H1 (cell line): ENCODE measurements at regions of chr9 and their contacts with region 1.

Region 1: GRCh38 chr9:113591001-113591898 is 127.7 kb downstream of the RGS3 start:
- DNase-seq: peak; percentile 60 to 94
- H3K4me3 ChIP-seq: no peak overlapping the region
- H3K27ac ChIP-seq: no peak overlapping the region
- H3K4me1 ChIP-seq: peaks cover 10 to 23% (median 15%) of the 10 kb centered on the region in 4 experiments
- H3K27me3 ChIP-seq: no peaks in the 10 kb centered on the region
- CTCF ChIP-seq: peak in 2 of 3 experiments; percentile 96 to 97; a peak in 3 of 4 replicates
- EP300 ChIP-seq: peak; percentile 12 to 47; a peak in 1 of 3 replicates
- POLR2A ChIP-seq: no peak
- RAD21 ChIP-seq: peak; percentile 99 to 100

Region 2: DNA sequence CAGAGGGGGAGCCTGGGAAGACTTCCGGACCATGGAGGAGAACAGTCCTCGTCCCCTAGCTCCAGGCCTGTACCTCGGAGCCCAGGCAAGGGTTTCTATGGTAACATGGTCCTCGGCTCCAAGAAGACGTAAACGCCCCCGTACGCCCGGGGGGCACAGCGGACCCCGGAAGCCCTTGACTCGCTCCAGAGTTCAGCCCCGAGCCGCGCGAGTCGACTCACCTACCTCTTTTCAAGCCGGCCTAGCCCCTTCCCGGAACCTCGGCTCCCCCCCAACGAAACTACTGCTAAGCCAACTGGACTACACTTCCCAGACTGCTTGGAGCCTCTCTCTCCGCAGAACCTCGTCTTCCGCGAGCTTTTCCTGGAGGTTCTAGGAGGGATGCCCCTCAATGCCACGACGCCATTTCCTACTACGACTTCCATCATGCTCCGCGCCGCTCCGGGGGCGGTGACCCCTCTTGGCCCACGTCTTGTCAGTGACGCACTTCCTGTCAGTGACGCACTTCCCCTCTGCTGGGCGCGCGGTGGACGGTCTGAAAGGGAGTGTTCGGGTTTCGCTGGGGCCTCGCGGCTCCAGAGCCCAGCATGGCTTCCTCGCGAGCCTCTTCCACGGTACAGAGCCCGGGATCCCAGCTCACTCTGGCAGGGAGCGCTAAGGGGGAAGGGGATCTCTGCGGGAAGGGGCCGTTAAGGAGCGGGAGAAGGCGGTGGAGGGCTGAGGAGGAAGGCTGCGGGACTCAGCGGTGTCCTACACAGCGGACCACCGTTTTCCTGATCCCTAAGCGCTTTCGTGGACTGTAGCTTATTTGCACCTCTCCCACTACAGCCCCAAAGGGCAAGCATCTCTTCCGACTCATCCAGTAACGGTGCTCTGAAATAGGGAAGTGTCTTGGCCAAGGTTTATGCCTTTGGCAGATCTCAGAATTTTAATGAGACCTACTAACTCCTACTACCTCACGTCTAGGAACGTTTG is 315.8 kb before region 1 on chr9 and contains the starts of genes CDC26 and PRPF4:
- CTCF ChIA-PET with region 1: interaction called, 35 read pairs
- POLR2A ChIA-PET with region 1: no interaction called
- DNase-seq: peak; percentile 89 to 92
- H3K4me3 ChIP-seq: peak within 1 kb of the TSS; percentile 68 to 98 (median 90)
- H3K27ac ChIP-seq: peak within 1 kb of the TSS; percentile 93
- H3K4me1 ChIP-seq: peaks cover 0 to 4% (median 0%) of the 10 kb centered on the region in 4 experiments; a peak in 1 of 7 replicates
- H3K27me3 ChIP-seq: no peaks in the 10 kb centered on the region
- CTCF ChIP-seq: no peak
- EP300 ChIP-seq: no peak
- POLR2A ChIP-seq: peak; percentile 93 to 96
- RAD21 ChIP-seq: no peak
- total RNA-seq, gene CDC26: 41.9 and 42.8 TPM in 2 replicates
- total RNA-seq, gene PRPF4: 33.4 and 36.8 TPM in 2 replicates

Region 3: GRCh38 chr9:113410207-113410864 is 180.9 kb before region 1 on chr9 and contains the starts of genes C9orf43 and POLE3:
- CTCF ChIA-PET with region 1: interaction called, 7 read pairs
- POLR2A ChIA-PET with region 1: interaction called, 17 read pairs
- DNase-seq: peak; percentile 78 to 94
- H3K4me3 ChIP-seq: peak within 1 kb of the TSS; percentile 59 to 100 (median 96)
- H3K27ac ChIP-seq: peak within 1 kb of the TSS; percentile 97
- H3K4me1 ChIP-seq: peaks cover 0 to 10% (median 4%) of the 10 kb centered on the region in 4 experiments; a peak in 1 of 7 replicates
- H3K27me3 ChIP-seq: no peaks in the 10 kb centered on the region
- CTCF ChIP-seq: no peak
- EP300 ChIP-seq: no peak
- POLR2A ChIP-seq: peak; percentile 90
- RAD21 ChIP-seq: peak in 1 of 2 experiments; percentile 9; a peak in 1 of 4 replicates
- total RNA-seq, gene C9orf43: 0.36 and 0.52 TPM in 2 replicates
- total RNA-seq, gene POLE3: 49.1 and 52.7 TPM in 2 replicates

Region 4: DNA sequence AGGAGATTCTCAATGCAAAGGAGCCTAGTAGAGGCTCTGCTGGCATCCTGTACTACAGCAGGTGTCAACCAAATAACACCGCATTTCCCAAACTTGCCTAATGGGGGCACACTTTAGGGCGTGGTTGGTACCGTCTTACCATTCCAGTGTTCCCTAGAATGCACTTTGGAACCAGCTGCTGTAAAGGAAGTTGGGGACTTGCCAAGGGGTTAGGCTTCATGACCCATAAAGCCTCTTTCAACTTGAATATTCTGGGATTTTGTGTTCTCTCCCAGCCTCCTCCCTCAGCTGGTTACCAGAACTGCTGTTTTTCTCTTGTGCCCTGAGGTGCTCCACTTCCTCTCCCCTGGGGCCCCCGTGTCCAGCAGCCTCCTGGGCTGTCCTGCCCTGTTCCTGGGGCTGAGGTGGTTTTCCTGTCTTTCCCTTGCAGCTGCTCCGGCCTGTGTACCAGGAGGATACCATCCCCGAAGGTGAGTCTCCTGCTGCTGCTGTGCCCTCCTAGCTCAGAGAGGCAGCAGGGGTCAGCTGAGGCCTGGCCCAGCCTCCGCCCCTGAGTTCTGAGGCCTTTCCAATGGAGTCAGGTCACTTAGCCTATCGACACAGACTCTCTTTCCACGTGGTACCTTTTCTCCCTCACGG is 83.0 kb before region 1 on chr9:
- CTCF ChIA-PET with region 1: interaction called, 19 read pairs
- POLR2A ChIA-PET with region 1: no interaction called
- DNase-seq: peak in 1 of 2 experiments; percentile 83
- H3K4me3 ChIP-seq: no peak overlapping the region
- H3K27ac ChIP-seq: no peak overlapping the region
- H3K4me1 ChIP-seq: peaks cover 6 to 10% (median 8%) of the 10 kb centered on the region in 4 experiments
- H3K27me3 ChIP-seq: no peaks in the 10 kb centered on the region
- CTCF ChIP-seq: peak; percentile 45 to 70 (median 50)
- EP300 ChIP-seq: no peak
- POLR2A ChIP-seq: no peak
- RAD21 ChIP-seq: peak; percentile 34 to 58; a peak in 3 of 4 replicates

Region 5: DNA sequence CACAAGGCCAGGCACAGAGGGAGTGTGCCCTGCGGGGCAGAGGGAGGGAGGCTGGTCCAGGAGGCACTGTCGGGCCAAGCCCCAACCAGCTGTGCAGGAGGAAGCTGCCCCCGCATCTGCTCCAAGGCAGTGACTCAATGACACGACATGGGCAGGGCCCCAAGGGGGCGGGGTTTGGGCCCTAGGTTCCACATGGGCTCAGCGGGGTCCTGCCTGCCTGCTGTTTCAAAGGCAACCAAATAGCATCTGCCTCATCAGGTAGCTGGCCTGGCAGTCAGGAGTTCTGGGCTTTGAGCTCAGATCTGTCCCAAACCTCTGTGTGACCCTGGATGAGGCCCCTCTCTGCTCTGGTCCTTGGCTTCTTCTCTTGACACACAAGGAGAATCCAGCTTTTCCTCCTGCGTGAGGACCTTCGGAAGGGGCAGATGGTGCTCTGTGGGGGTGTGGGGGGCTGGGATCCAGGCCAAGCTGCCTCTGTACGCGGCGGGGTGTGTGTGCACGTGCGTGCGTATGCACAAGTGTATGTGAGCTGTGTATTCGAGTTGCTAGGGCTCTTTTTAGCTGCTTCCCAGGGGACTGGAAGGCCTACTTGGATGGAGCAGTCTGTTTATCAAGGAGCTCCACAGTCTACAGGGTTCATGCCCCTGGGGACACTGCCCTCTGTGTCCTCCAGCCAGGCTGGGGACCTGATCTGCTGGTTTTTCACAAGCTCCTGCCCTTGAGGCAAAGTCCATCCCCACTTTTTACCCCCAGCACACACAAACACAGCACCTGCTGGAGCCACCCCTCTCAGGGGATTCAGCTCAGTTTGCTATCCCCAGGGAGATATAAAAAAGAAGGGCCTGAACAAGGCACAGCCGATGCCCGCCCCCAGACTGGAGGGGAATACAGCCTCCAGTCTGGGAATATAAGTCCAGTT is 11.1 kb after region 1 on chr9:
- CTCF ChIA-PET with region 1: interaction called, 76 read pairs
- POLR2A ChIA-PET with region 1: interaction called, 15 read pairs
- DNase-seq: peak; percentile 59 to 87
- H3K4me3 ChIP-seq: no peak overlapping the region; a peak in 1 of 8 replicates
- H3K27ac ChIP-seq: peak overlapping the region; percentile 39; the same call in 1 of the 2 replicates
- H3K4me1 ChIP-seq: peaks cover 0 to 17% (median 12%) of the 10 kb centered on the region in 4 experiments; a peak in 6 of 7 replicates
- H3K27me3 ChIP-seq: no peaks in the 10 kb centered on the region
- CTCF ChIP-seq: no peak
- EP300 ChIP-seq: no peak
- POLR2A ChIP-seq: 0 out of 3 replicates have a peak, but pooled peaks of 1 of the 2 experiments have one; percentile 43
- RAD21 ChIP-seq: no peak

Region 6: DNA sequence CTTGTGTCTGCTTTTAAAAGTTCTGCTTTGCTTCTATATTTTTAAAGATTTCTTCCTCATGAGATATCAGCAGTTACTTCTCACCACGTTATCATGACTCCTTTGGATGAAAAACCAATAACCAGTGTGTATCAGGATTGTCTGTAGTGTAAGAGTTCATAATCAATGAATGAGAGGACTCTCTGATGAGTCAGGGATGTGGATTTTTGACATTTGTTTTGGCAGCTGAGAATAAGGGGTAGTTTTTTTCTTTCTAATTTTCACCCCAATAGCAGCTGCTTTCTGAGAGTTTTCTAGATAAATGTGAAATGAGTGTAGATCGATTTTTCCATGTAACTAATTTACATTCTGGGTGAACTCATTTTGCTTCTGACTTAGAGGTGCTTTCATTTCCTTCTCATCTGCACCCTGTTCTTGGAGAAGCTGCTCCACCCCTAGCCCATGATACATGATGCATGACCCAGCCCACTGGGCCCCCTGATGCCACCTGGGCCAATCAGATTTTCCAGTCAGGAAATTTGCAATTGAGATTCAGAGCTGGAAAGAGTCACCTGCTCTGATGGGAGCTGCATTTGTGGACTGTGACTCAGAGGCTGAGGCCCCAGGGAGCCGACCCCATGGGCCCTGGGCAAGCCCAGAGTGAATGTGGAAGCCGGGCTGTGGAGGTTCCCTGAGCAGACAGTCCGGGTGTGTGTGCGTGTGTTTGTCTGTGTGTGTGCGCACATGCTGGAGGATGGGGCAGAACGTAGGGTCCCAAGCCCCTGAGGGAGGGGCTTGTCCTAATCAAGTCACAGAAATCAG is 31.6 kb after region 1 on chr9:
- CTCF ChIA-PET with region 1: interaction called, 130 read pairs
- POLR2A ChIA-PET with region 1: interaction called, 5 read pairs
- DNase-seq: peak; percentile 77
- H3K4me3 ChIP-seq: peak overlapping the region in 1 of 4 experiments; percentile 18; a peak in 1 of 8 replicates
- H3K27ac ChIP-seq: peak overlapping the region; percentile 88; the same call in 1 of the 2 replicates
- H3K4me1 ChIP-seq: peaks cover 6 to 23% (median 18%) of the 10 kb centered on the region in 4 experiments
- H3K27me3 ChIP-seq: no peaks in the 10 kb centered on the region; a peak in 3 of 7 replicates
- CTCF ChIP-seq: no peak
- EP300 ChIP-seq: peak in 1 of 2 experiments; percentile 78; a peak in 1 of 3 replicates
- POLR2A ChIP-seq: peak in 1 of 2 experiments; percentile 51; a peak in 2 of 3 replicates
- RAD21 ChIP-seq: no peak

Region 7: GRCh38 chr9:113695901-113696300 is 104.7 kb after region 1 on chr9:
- CTCF ChIA-PET with region 1: no interaction called
- POLR2A ChIA-PET with region 1: no interaction called
- DNase-seq: no peak
- H3K4me3 ChIP-seq: no peak overlapping the region
- H3K27ac ChIP-seq: no peak overlapping the region
- H3K4me1 ChIP-seq: no peaks in the 10 kb centered on the region
- H3K27me3 ChIP-seq: no peaks in the 10 kb centered on the region; a peak in 1 of 7 replicates
- CTCF ChIP-seq: no peak
- EP300 ChIP-seq: no peak
- POLR2A ChIP-seq: no peak
- RAD21 ChIP-seq: no peak

Region 8: GRCh38 chr9:113785334-113785733 is 194.1 kb after region 1 on chr9:
- CTCF ChIA-PET with region 1: no interaction called
- POLR2A ChIA-PET with region 1: no interaction called
- DNase-seq: no peak
- H3K4me3 ChIP-seq: no peak overlapping the region
- H3K27ac ChIP-seq: no peak overlapping the region
- H3K4me1 ChIP-seq: peaks cover 0 to 6% (median 0%) of the 10 kb centered on the region in 4 experiments; a peak in 2 of 7 replicates
- H3K27me3 ChIP-seq: no peaks in the 10 kb centered on the region
- CTCF ChIP-seq: no peak
- EP300 ChIP-seq: no peak
- POLR2A ChIP-seq: no peak
- RAD21 ChIP-seq: no peak